Dorsolateral prefrontal cortex (tissue), 120 donors: ENCODE measurements at regions of chr22 and their contacts with region 1.

Region 1: GRCh38 chr22:20020533-20021195 is at the start of gene TANGO2:
- DNase-seq: peak; percentile 84 to 98 (median 90)
- H3K4me3 ChIP-seq: peak within 1 kb of the TSS; percentile 53 to 100 (median 96)
- H3K27ac ChIP-seq: peak within 1 kb of the TSS; percentile 49 to 95 (median 90)
- H3K27me3 ChIP-seq: no peaks in the 10 kb centered on the region
- CTCF ChIP-seq: peak in 14 of 56 donors; percentile 5 to 47 (median 18)
- total RNA-seq, gene TANGO2: 45.5 to 81.1 (median 59.7) TPM

Region 2: DNA sequence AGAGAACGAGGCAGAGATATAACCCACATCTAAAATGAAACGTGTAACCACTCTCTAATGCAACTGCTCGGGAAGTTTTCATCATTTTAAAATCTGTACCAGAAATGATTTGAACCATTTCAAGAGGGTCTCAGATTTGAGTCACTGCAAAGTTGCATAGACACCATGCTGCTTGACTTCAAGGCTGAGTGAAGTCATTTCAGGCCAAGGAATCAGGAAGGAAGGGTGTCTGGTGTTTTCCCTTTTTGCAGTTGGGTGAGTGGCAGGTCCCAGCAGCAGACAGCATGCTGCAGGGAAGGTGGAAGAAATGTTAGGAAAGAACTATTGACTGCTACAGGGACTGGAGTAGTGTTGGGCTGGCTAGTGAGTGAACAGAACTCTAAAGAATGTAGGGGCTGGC is 16.8 kb after region 1 on chr22:
- intact Hi-C with region 1: loop called in 1 of 2 experiments (anchors 1 kb)
- DNase-seq: no peak
- H3K4me3 ChIP-seq: no peak overlapping the region
- H3K27ac ChIP-seq: peak overlapping the region in 51 of 59 donors; percentile 47 to 95 (median 80)
- H3K27me3 ChIP-seq: no peaks in the 10 kb centered on the region
- CTCF ChIP-seq: no peak

Region 3: DNA sequence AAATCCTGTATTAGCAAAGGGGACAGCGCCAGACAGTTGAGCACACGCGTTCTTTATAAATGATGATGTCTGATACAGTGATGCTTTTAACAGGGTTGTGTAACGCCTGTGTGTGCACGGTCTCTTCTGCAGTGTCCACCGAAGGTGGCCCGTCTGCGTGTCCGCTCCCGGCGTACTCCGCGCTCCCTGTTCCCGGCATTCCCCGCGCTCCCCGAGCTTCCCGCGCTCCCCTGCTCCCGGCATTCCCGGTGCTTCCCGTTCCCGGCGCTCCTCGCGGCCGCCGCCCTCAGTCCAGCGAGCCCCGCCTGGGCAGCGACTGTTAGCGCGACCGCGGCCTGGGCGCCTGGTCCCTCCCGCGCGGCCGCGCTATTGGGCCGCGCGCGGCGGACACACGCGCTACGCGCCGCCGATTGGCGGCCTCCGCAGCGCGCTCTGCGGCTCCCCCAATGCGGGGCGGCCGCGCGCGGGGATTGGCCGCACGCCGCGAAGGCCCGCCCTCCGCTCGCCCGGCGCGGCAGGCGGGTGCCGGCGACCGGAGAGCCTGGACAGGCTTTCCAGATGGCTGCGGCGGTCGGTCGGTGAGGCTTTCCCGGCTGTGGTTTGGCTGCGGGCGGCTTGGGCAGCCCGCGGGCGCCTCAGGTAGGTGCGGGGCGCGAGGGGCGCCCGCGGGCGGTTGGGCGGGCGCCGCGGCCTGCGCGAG is 59.2 kb after region 1 on chr22 and contains the start of gene DGCR8:
- intact Hi-C with region 1: loop called in 1 of 2 experiments (anchors 5 kb)
- DNase-seq: peak; percentile 87 to 97 (median 94)
- H3K4me3 ChIP-seq: peak within 1 kb of the TSS; percentile 62 to 96 (median 86)
- H3K27ac ChIP-seq: peak within 1 kb of the TSS; percentile 49 to 99 (median 91)
- H3K27me3 ChIP-seq: no peaks in the 10 kb centered on the region
- CTCF ChIP-seq: peak in 32 of 56 donors; percentile 2 to 51 (median 28)
- total RNA-seq, gene DGCR8: 27.2 to 57.7 (median 37.4) TPM

Region 4: DNA sequence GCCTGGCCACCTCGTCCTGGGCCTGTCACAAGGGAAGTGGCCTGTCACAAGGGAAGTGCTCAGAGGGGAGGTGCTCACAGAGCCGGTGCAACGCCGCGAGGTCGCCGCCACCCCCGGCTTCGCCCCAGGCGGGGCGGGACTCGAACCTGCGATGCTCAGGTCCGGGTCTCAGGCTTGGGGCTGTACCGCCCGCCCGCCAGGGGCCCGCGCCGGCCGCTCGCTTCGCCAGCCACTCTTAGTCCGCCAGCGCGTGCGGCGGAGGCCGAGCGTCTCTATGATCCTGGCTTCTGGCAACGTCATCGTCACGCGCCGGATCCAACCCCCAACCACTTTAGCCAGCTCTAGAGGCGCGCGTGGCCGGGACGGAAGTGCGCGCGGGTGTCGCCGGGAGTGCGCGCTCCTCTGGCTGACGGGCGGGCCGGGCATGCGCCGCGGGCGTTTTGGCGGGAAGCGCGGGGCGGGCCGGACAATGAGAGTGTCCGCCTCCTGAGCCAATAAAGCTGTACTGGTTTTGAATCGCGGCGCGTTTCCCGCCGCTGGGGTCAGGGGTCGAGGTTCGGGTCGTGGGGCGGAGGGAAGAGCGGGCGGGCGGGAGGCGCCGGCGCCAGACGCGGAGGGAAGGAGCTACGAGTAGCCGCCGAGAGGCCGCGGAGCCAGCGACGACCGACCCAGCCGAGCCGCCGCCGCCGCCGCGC is 96.4 kb after region 1 on chr22 and contains the start of gene TRMT2A:
- intact Hi-C with region 1: loop called in 1 of 2 experiments (anchors 1 kb)
- DNase-seq: peak; percentile 95 to 99 (median 96)
- H3K4me3 ChIP-seq: peak within 1 kb of the TSS; percentile 50 to 98 (median 87)
- H3K27ac ChIP-seq: peak within 1 kb of the TSS; percentile 20 to 96 (median 84)
- H3K27me3 ChIP-seq: no peaks in the 10 kb centered on the region
- CTCF ChIP-seq: peak in 44 of 56 donors; percentile 8 to 63 (median 36)
- total RNA-seq, gene TRMT2A: 33.1 to 73.3 (median 50.4) TPM